Activated CD4-positive, alpha-beta T cell treated with anti-CD3 and anti-CD28 coated beads, Interleukin-2, amount 10 ng/mL, durations not matched to agents 24 days and 14 days (primary cell): ENCODE measurements at regions of chr18 and their contacts with region 1.

Region 1: DNA sequence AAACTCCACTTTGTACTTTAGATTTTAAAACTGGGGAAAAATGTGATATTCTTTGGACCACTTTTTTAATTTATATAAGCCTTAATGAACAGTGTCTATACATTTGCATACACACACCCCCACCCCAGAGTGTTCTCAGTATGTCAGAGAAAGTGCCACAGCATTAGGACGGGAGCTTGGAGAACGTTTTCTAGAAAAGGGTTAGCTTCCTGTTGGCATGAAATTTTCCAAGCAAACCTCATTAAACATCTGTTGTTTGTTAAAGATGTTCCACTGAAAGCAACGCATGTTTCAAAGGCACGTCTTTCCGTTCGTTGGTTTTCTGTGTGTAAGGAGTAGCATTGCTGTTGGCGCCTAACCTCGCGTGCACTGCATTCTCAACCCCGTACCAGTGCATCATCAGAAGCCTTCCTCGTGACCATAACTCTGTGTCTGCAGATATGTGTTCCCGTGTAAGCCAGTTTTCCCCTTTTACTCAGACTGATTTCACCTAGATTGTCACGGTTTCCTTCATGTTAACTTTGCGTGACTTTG is 228.5 kb downstream of the ALPK2 start:
- DNase-seq: peak; percentile 67
- H3K4me3 Mint-ChIP-seq: peak overlapping the region; percentile 2
- H3K27ac Mint-ChIP-seq: no peak overlapping the region
- H3K4me1 Mint-ChIP-seq: peaks cover 8% of the 10 kb centered on the region
- H3K27me3 Mint-ChIP-seq: no peaks in the 10 kb centered on the region

Region 2: GRCh38 chr18:58043491-58044379 is 356.7 kb before region 1 on chr18 and contains the start of gene NEDD4L:
- intact Hi-C with region 1: no loop called
- DNase-seq: peak; percentile 91
- H3K4me3 Mint-ChIP-seq: peak within 1 kb of the TSS; percentile 90
- H3K27ac Mint-ChIP-seq: peak within 1 kb of the TSS; percentile 60
- H3K4me1 Mint-ChIP-seq: peaks cover 21% of the 10 kb centered on the region
- H3K27me3 Mint-ChIP-seq: peaks cover 60% of the 10 kb centered on the region
- total RNA-seq, gene NEDD4L: 3.5 and 4.2 TPM in 2 replicates

Region 3: DNA sequence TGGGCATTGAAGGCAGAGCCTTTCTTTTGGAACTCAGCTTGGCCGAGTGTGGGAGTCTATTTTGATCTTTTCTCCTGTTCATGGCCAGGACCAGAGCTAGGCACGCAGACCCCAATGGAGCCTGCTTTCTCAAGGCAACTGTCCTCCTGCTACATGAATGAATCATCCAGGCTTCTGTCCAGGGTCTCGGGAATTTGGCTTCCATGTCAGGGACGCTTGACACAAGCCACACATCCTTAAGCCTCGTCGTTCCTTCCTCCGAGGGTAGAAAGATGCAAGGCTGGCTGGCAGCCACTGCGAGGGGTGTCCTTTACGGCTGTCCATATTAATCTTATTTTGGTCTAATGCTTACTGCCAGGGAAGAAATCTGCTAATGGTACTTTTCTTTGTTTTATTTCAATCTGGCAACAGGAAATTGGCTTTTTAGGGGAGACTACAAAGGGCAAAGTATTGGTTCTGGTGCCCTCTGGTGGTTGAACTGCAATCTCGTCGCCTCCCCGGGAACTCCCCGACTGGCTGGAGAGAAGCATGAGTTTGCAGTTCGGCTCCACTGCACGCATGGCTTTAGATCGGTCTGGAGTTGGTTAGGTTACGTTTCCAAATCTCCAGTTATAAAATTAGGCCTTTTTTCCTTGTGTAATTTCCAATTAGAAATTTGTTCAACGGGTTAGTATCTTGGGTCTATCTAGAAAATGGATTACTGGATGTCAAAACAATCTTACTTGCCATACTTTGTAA is 93.3 kb after region 1 on chr18:
- intact Hi-C with region 1: loop called (anchors 1 kb)
- DNase-seq: peak; percentile 91
- H3K4me3 Mint-ChIP-seq: no peak overlapping the region
- H3K27ac Mint-ChIP-seq: no peak overlapping the region
- H3K4me1 Mint-ChIP-seq: peaks cover 3% of the 10 kb centered on the region
- H3K27me3 Mint-ChIP-seq: peaks cover 30% of the 10 kb centered on the region